ENCODE measurements at regions of chr6 and their contacts with region 1.

Region 1: GRCh38 chr6:109036574-109037294 is 57.9 kb downstream of the SESN1 start:
- DNase-seq: peak in 4 of 5 donors; percentile 21 to 38 (median 34)
- H3K4me3 ChIP-seq: no peak overlapping the region
- H3K4me3 Mint-ChIP-seq: peak overlapping the region in 7 of 8 donors; percentile 2 to 72 (median 55)
- H3K27ac ChIP-seq: no peak overlapping the region
- H3K27ac Mint-ChIP-seq: peak overlapping the region; percentile 19 to 90 (median 74)
- H3K4me1 ChIP-seq: peaks cover 30% of the 10 kb centered on the region
- H3K4me1 Mint-ChIP-seq: peaks cover 31 to 69% (median 42%) of the 10 kb centered on the region in 4 donors
- H3K27me3 ChIP-seq: no peaks in the 10 kb centered on the region
- H3K27me3 Mint-ChIP-seq: no peaks in the 10 kb centered on the region

Region 2: GRCh38 chr6:108684701-108685329 is 351.9 kb before region 1 on chr6:
- CTCF ChIA-PET with region 1: no interaction called
- POLR2A ChIA-PET with region 1: no interaction called
- intact Hi-C with region 1: no loop called
- DNase-seq: peak in 1 of 5 donors; percentile 34
- H3K4me3 ChIP-seq: no peak overlapping the region
- H3K4me3 Mint-ChIP-seq: no peak overlapping the region
- H3K27ac ChIP-seq: no peak overlapping the region
- H3K27ac Mint-ChIP-seq: peak overlapping the region in 3 of 7 donors; percentile 1 to 5 (median 2)
- H3K4me1 ChIP-seq: no peaks in the 10 kb centered on the region
- H3K4me1 Mint-ChIP-seq: peaks cover 4 to 10% (median 7%) of the 10 kb centered on the region in 4 donors
- H3K27me3 ChIP-seq: no peaks in the 10 kb centered on the region
- H3K27me3 Mint-ChIP-seq: no peaks in the 10 kb centered on the region

Region 3: GRCh38 chr6:109015176-109015575 is 21.6 kb before region 1 on chr6:
- CTCF ChIA-PET with region 1: interaction called, 5 read pairs
- POLR2A ChIA-PET with region 1: interaction called, 59 read pairs
- intact Hi-C with region 1: no loop called
- DNase-seq: no peak
- H3K4me3 ChIP-seq: no peak overlapping the region
- H3K4me3 Mint-ChIP-seq: peak overlapping the region in 2 of 8 donors; percentile 10 to 61
- H3K27ac ChIP-seq: no peak overlapping the region
- H3K27ac Mint-ChIP-seq: peak overlapping the region; percentile 9 to 76 (median 33)
- H3K4me1 ChIP-seq: peaks cover 53% of the 10 kb centered on the region
- H3K4me1 Mint-ChIP-seq: peaks cover 37 to 63% (median 48%) of the 10 kb centered on the region in 4 donors
- H3K27me3 ChIP-seq: no peaks in the 10 kb centered on the region
- H3K27me3 Mint-ChIP-seq: no peaks in the 10 kb centered on the region

Region 4: GRCh38 chr6:109050012-109050411 is 13.3 kb after region 1 on chr6:
- CTCF ChIA-PET with region 1: interaction called, 16 read pairs
- POLR2A ChIA-PET with region 1: interaction called, 8 read pairs
- intact Hi-C with region 1: no loop called
- DNase-seq: no peak
- H3K4me3 ChIP-seq: no peak overlapping the region
- H3K4me3 Mint-ChIP-seq: no peak overlapping the region
- H3K27ac ChIP-seq: no peak overlapping the region
- H3K27ac Mint-ChIP-seq: peak overlapping the region in 1 of 7 donors; percentile 50
- H3K4me1 ChIP-seq: peaks cover 24% of the 10 kb centered on the region
- H3K4me1 Mint-ChIP-seq: peaks cover 31 to 42% (median 33%) of the 10 kb centered on the region in 4 donors
- H3K27me3 ChIP-seq: no peaks in the 10 kb centered on the region
- H3K27me3 Mint-ChIP-seq: no peaks in the 10 kb centered on the region